ENCODE measurements at regions of chr6 and their contacts with region 1.

Region 1: GRCh38 chr6:135851442-135852271 is at the start of gene PDE7B:
- DNase-seq: peak; percentile 95
- total RNA-seq, gene PDE7B: 5.9 to 7.2 TPM

Region 2: DNA sequence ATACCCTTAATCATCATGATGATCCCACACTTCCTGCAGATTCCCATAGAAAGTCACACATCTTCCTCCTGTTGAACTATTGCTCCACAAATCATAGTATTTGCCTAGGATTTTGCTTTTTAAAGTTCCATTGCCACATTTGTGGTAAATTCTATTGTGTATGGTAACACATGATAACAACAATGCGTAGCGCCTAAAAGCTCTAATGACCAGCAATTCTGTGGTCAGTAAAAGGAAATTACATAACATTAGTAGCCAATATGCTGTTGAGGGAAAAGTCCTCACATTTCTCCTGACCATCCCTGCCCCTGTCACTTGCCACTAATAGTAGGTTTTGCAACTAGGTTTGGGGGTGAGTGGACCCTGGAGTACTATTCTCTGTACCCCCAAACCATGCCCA is 32.0 kb before region 1 on chr6:
- intact Hi-C with region 1: loop called in 1 of 2 experiments (anchors 1 kb)
- DNase-seq: no peak

Region 3: GRCh38 chr6:135895231-135895911 is 43.7 kb after region 1 on chr6:
- intact Hi-C with region 1: no loop called
- DNase-seq: no peak